ENCODE measurements at regions of chr2 and their contacts with region 1.

Region 1: GRCh38 chr2:208129744-208130711 is at the start of gene CRYGC:
- DNase-seq: no peak
- ATAC-seq: no peak
- total RNA-seq, gene CRYGC: not detected

Region 2: GRCh38 chr2:207640661-207641060 is 489.4 kb before region 1 on chr2:
- intact Hi-C with region 1: loop called (anchors 5 kb)
- DNase-seq: no peak
- ATAC-seq: no peak

Measured in Right ventricle myocardium inferior (tissue), 1 donor.